Thyroid gland (tissue), 4 donors: ENCODE measurements at regions of chr15 and their contacts with region 1.

Region 1: DNA sequence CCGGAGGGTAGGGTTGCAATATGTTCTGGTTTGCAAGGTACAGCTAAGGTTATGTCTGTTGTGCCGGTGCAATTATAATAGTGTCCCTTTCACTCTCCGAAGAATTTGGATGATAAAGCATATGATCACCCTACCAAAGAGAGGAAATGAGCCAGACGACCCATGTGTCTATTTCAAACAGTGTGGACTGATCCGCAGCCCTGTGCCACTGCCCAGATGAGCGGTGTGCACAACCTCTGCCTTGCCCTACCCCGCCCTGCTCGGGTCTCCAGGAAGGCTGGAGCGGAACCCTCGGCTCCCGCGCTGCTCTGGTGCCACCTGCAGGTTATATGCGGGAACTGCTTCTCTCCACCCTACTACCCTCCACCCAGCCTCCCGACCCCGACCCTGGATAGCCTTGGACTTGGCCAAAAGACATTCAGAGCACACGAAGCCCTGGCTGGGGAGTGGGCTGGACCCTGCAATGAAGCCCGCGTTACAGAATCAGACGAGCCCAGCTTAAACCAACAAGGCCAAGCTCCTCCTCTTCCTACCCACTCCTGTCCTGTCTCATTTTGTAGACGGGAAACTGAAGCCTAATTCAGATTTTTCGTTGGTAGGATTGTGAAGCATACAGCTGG is 68.4 kb upstream of the CHRNB4 start:
- DNase-seq: peak; percentile 67 to 73
- H3K4me3 ChIP-seq: no peak overlapping the region
- H3K27ac ChIP-seq: no peak overlapping the region
- H3K4me1 ChIP-seq: peaks cover 0 to 4% of the 10 kb centered on the region in 2 donors
- H3K27me3 ChIP-seq: no peaks in the 10 kb centered on the region
- CTCF ChIP-seq: peak; percentile 75 to 94 (median 89)
- POLR2A ChIP-seq: no peak

Region 2: DNA sequence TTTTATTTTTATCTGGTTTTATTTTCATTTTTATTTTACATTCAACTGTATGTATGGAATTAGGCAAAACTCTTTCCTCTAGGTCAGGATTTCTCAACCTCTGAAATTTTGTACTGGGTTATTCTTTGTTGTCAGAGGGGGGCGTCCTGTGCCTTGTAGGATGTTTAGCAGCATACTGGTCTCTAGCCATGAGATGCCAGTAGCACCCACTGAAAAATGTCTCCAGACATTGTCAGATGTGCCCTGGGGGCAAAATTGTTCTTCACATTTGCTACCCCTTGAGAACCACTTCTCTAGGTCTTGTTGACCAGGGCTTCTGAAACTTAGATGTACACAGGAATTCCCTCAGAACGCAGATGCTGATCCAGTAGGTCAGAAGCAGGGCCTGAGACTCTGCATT is 138.7 kb before region 1 on chr15:
- intact Hi-C with region 1: no loop called
- DNase-seq: no peak
- H3K4me3 ChIP-seq: no peak overlapping the region
- H3K27ac ChIP-seq: no peak overlapping the region
- H3K4me1 ChIP-seq: peaks cover 9% of the 10 kb centered on the region in 2 donors
- H3K27me3 ChIP-seq: peaks cover 4% of the 10 kb centered on the region
- CTCF ChIP-seq: no peak
- POLR2A ChIP-seq: no peak

Region 3: GRCh38 chr15:78638658-78639314 is 70.6 kb before region 1 on chr15:
- intact Hi-C with region 1: loop called (anchors 5 kb)
- DNase-seq: peak; percentile 53 to 56
- H3K4me3 ChIP-seq: no peak overlapping the region
- H3K27ac ChIP-seq: no peak overlapping the region
- H3K4me1 ChIP-seq: peaks cover 5 to 13% of the 10 kb centered on the region in 2 donors
- H3K27me3 ChIP-seq: no peaks in the 10 kb centered on the region
- CTCF ChIP-seq: peak in 4 of 6 experiments; percentile 15 to 55 (median 48)
- POLR2A ChIP-seq: no peak